ENCODE measurements at regions of chr5 and their contacts with region 1.

Region 1: GRCh38 chr5:170434966-170435605 is 45.9 kb upstream of the KCNMB1 start:
- DNase-seq: peak; percentile 8 to 23
- ATAC-seq: peak; percentile 27 to 47
- H3K4me3 ChIP-seq: no peak overlapping the region
- H3K27ac ChIP-seq: no peak overlapping the region
- H3K4me1 ChIP-seq: no peaks in the 10 kb centered on the region
- H3K27me3 ChIP-seq: peaks cover 0 to under 1% (median 0%) of the 10 kb centered on the region in 3 donors
- CTCF ChIP-seq: peak; percentile 56 to 88 (median 79)
- POLR2A ChIP-seq: no peak

Region 2: DNA sequence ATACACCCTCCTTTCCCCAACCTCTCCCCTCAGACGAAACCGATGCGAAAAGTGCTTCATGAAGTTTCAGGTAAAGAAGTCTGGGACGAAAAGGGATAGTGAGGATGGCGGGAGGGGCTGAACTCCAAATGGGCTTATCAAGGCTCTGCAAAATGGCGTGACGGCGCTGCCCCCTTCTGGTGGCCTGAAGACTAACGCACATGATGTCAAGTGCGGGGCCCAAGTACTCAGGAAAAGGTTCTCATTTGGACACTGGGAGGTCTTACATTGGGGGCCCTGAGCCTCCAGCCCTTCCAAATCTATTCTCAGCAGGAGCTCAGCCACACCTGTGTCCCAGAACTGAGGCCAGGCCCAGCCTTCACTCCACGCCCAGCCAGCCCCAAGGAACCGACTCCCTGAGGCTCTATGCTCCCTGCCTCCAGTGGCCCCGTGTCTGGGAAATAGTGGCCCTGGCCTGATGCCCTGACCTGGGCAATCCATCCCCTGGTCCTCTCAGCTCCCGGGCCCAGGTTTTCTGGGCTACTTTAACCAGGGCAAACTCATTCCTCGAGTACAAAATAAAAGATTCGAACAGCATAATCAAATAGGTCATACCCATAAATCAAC is 188.6 kb after region 1 on chr5:
- in situ Hi-C with region 1: loop called (anchors 5 to 10 kb)
- intact Hi-C with region 1: no loop called
- DNase-seq: no peak
- ATAC-seq: no peak
- H3K4me3 ChIP-seq: no peak overlapping the region
- H3K27ac ChIP-seq: no peak overlapping the region
- H3K4me1 ChIP-seq: no peaks in the 10 kb centered on the region
- H3K27me3 ChIP-seq: no peaks in the 10 kb centered on the region
- CTCF ChIP-seq: peak in 3 of 5 experiments; percentile 26 to 35 (median 33)
- POLR2A ChIP-seq: no peak

Region 3: GRCh38 chr5:170633235-170634081 is 198.4 kb after region 1 on chr5:
- in situ Hi-C with region 1: loop called in 3 of 4 experiments (anchors 10 kb)
- intact Hi-C with region 1: loop called (anchors 2 kb)
- DNase-seq: peak; percentile 24 to 36
- ATAC-seq: peak; percentile 66 to 70
- H3K4me3 ChIP-seq: peak overlapping the region in 2 of 4 donors; percentile 20 to 29
- H3K27ac ChIP-seq: peak overlapping the region; percentile 24 to 58 (median 40)
- H3K4me1 ChIP-seq: peaks cover 4 to 8% of the 10 kb centered on the region in 2 donors
- H3K27me3 ChIP-seq: no peaks in the 10 kb centered on the region
- CTCF ChIP-seq: peak in 2 of 5 experiments; percentile 0 to 9
- POLR2A ChIP-seq: no peak

Region 4: DNA sequence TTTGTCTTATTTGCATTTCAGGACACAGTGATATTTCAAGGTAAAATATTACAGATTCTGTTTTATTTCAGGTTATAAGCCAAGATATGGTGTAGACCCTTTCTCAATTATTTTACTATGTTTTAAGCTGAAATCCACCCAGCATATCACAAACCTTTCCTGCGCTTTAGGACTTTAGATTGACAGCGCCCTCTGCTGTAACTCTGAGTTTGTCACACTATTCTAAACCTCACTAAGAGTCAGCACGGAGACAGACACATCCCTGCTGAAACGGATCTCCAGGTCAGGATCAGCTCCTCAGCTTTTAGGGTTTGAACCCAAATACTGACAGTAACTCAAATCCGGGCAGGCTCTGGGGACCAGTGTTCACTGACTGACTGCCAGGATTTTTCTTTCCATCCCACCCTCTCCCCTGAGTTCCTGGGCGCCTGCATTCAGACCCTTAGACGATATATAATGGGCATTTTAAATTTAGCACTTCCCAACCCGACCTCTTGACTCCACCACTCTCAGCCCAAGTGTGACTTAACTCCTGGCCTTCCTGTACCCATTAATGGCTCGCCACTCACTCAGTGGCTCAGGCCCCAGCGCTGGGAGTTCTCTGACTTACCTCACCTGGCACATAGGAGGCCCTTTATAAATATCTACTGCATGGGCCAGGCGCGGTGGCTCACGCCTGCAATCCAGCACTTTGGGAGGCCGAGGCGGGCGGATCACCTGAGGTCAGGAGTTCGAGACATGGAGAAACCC is 907.5 kb after region 1 on chr5:
- in situ Hi-C with region 1: loop called in 1 of 4 experiments (anchors 25 kb)
- intact Hi-C with region 1: no loop called
- DNase-seq: no peak
- ATAC-seq: no peak
- H3K4me3 ChIP-seq: no peak overlapping the region
- H3K27ac ChIP-seq: no peak overlapping the region
- H3K4me1 ChIP-seq: no peaks in the 10 kb centered on the region
- H3K27me3 ChIP-seq: peaks cover 0 to 8% (median 6%) of the 10 kb centered on the region in 3 donors
- CTCF ChIP-seq: peak in 2 of 5 experiments; percentile 17 to 35
- POLR2A ChIP-seq: no peak